Head of caudate nucleus (tissue), 42 donors: ENCODE measurements at regions of chr4 and their contacts with region 1.

Region 1: GRCh38 chr4:163554870-163555465 is 60.5 kb downstream of the TMA16 start:
- DNase-seq: no peak

Region 2: GRCh38 chr4:163662768-163663167 is 107.8 kb after region 1 on chr4:
- intact Hi-C with region 1: no loop called
- DNase-seq: no peak

Region 3: DNA sequence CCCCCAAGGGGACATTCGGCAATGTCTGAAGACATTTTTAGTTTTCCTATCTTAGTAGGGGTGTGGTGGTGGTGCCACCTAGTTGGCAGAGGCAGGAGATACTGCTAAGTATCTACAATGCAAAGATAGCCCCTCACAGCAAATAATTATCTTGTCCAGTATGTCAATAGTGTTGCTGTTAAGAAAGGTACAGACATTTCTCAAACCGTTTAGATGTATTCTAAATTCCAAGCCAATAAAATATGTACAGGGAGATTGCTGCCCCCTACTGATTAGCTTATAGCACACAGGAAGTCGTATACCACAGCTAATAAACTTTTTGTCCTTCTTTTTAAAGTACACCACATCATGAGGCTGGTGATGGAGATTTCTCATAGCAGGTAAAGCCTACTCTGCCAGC is 200.0 kb after region 1 on chr4:
- intact Hi-C with region 1: loop called (anchors 10 kb)
- DNase-seq: peak in 1 of 42 donors; percentile 18

Region 4: DNA sequence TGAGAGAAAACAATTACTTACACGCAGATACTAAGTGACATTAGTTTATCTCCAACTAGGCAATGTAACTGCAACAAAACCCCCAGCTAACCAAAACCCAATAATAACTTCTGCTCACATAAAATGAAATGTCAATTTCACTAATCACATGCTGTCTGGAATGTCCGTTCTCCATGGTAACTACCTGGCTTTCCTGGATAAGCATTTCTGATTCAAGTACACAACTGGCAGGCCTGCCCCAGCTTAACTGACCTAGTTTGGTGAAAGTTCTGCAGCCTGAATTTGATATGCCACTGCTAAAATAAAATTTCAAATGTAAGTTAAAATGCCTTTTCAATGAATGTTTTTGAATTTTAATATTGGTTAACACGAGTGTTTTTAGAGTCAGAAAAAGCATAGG is 253.1 kb after region 1 on chr4:
- intact Hi-C with region 1: no loop called
- DNase-seq: no peak

Region 5: DNA sequence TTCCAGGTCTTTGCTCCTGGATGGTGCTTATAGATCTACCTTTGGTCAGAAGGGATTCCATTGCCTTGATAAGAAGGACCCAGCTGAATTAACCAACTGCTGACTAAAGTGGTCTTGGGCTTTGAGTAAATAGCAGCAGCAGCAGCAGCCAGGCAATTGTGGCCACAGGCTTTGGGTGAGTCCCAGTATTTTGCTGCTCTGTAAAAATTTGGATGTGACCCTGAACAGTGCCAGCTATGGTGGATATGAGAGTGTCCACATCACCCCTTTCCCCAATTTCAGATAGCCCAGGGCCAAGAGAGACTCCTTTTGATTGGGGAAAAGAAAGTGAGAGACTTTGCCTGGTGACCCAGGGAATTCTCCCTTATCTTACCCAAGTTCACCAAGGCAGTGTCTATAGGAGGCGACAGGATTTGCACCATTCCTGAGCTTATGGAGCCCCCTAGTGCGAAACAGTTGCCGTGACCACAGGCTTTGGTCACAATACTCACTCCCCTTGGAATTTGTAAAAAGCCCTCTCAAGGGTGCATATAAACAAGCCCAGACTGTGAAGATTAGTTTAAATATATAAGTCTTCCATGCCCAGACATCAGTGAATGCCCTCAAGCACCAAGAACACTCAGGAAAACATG is 457.5 kb after region 1 on chr4:
- intact Hi-C with region 1: loop called (anchors 5 kb)
- DNase-seq: peak in 25 of 42 donors; percentile 11 to 71 (median 31)

Region 6: DNA sequence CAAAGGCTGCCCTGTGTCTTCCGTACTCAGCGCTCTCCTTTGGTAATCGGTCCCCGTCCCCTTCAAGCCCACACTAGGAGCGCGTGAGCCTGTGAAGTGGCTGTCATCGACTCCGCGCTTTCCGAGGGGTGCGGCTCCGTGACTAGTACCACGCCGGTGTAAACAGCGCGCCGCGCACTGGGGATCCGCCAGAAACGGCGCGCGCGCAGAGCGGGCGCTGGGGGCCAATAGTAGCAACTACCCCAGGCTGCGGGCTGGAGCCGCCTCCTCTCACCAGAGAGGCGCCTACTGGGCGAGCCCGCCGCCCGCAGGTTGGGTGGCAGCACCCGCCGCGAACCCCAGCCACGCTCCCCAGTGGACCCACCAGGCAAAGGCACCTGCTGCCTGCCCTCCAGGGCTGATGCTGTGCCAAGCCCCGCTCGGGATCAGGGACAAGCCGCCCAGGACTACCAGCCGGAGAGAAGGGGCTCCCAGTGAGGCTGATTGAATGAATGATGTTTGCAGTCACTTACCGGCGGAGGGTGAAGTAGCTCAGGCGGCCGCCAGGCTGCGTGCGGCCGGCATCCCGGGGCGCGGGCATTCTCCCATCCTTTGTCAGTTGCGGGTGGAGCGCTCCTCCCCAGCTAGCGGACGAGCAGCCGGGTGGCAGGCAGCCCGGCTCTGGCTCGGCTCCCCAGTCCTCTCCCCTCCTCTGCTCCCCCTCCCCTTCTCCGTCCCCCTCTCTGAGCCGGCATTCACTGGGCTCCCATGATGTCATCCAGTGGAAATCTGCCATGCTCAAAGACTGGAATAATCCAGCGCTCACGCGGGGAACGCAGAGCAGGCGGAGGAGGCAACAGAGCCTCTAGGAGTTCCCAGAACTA is 828.6 kb after region 1 on chr4:
- intact Hi-C with region 1: loop called (anchors 10 kb)
- DNase-seq: peak; percentile 83 to 98 (median 94)

Region 7: GRCh38 chr4:164731827-164732474 is 1177.0 kb after region 1 on chr4:
- intact Hi-C with region 1: loop called (anchors 5 kb)
- DNase-seq: peak; percentile 32 to 89 (median 71)

Region 8: GRCh38 chr4:164748375-164748774 is 1193.4 kb after region 1 on chr4:
- intact Hi-C with region 1: loop called (anchors 5 kb)
- DNase-seq: no peak